Lower leg skin (tissue), 4 donors: ENCODE measurements at regions of chr7 and their contacts with region 1.

Region 1: DNA sequence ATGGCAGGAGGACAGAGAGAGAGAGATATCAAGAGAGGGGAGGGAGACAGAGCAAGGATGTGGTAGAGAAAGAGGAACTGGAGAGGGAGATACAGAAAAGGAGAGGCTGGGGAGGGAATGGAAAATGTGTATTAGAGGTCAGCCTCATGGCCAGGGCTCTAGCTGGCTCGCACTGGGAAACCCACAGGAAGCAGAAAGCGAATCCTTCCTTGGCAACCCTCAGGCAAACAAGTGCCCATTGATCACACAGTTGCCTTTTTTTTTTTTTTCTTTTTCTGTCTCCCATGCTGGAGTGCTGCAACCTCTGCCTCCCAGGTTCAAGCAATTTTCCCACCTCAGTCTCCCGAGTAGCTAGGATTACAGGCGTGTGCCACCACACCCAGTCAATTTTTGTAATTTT is 391.2 kb downstream of the TYW1 start:
- DNase-seq: no peak
- H3K4me3 ChIP-seq: no peak overlapping the region
- CTCF ChIP-seq: no peak
- POLR2A ChIP-seq: no peak

Region 2: GRCh38 chr7:67470256-67470751 is 82.5 kb after region 1 on chr7:
- intact Hi-C with region 1: no loop called
- DNase-seq: no peak
- H3K4me3 ChIP-seq: no peak overlapping the region
- CTCF ChIP-seq: no peak
- POLR2A ChIP-seq: no peak

Region 3: DNA sequence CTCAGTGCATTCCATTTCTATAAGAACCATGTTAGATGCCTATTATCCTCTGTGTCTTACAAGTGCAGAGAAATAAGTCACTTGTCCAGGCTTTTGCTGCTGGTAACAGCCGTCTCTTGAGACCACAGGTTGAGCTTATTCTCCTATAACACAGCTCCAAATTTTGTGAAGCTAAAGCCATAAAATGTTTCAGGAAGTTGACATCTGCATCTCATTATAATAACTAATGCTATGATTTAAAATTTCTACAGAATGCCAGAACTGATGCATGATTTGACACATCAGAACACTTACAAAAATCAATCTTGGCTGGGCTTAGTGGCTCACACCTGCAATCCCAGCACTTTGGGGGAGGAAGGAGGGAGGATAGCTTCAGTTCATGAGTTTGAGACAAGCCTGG is 595.6 kb after region 1 on chr7:
- intact Hi-C with region 1: loop called (anchors 5 kb)
- DNase-seq: no peak
- H3K4me3 ChIP-seq: no peak overlapping the region
- CTCF ChIP-seq: no peak
- POLR2A ChIP-seq: no peak